ENCODE measurements at regions of chr6 and their contacts with region 1.

Region 1: GRCh38 chr6:34887753-34888513 is at the start of gene TAF11:
- DNase-seq: peak; percentile 86
- H3K4me3 Mint-ChIP-seq: peak within 1 kb of the TSS; percentile 98
- H3K27ac Mint-ChIP-seq: peak within 1 kb of the TSS; percentile 96
- H3K4me1 Mint-ChIP-seq: peaks cover 28% of the 10 kb centered on the region
- H3K27me3 Mint-ChIP-seq: peaks cover 3% of the 10 kb centered on the region
- total RNA-seq, gene TAF11: 37.2 and 38.4 TPM in 2 replicates

Region 2: DNA sequence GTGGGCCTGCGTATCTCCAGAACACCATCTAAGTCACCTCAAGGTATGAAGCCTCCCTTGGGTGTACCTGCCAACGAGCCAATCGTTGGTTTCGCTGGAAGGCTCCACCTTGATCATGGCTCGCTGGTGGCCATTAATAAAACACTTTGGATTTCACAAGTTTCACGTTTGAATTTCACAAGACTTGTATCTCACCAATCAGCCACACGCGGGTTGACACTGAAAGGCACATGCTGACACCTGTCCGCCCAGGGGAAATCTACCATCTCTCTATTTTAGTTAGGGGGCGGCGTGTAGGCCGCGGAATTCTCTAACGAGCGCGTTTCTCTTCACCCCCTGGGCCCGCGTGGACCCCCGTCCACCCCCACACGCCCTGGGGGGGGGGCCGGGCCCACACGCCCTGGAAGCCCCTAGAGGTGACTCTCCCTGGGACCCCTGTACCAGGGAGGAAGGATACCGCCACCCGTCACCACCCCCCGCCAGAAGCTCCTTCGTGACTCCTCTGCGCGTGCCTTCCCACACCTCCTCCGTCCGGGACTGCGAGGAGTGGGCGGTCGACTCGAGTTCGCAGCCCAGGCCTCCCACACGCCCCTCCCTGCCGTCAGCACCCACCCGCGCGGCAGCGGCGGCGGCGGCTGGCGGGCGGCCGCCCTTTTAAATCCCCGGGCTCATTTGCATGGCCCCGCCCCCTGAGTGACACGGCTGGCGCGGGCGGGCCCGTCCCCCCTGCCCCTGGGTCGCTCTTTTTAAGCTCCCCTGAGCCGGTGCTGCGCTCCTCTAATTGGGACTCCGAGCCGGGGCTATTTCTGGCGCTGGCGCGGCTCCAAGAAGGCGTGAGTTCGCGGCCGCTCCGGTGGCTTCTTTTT is 651.6 kb before region 1 on chr6 and contains the start of gene HMGA1:
- intact Hi-C with region 1: loop called (anchors 5 kb)
- DNase-seq: peak; percentile 83
- H3K4me3 Mint-ChIP-seq: peak within 1 kb of the TSS; percentile 86
- H3K27ac Mint-ChIP-seq: peak within 1 kb of the TSS; percentile 92
- H3K4me1 Mint-ChIP-seq: peaks cover 43% of the 10 kb centered on the region
- H3K27me3 Mint-ChIP-seq: no peaks in the 10 kb centered on the region
- total RNA-seq, gene HMGA1: 415 and 438 TPM in 2 replicates

Region 3: DNA sequence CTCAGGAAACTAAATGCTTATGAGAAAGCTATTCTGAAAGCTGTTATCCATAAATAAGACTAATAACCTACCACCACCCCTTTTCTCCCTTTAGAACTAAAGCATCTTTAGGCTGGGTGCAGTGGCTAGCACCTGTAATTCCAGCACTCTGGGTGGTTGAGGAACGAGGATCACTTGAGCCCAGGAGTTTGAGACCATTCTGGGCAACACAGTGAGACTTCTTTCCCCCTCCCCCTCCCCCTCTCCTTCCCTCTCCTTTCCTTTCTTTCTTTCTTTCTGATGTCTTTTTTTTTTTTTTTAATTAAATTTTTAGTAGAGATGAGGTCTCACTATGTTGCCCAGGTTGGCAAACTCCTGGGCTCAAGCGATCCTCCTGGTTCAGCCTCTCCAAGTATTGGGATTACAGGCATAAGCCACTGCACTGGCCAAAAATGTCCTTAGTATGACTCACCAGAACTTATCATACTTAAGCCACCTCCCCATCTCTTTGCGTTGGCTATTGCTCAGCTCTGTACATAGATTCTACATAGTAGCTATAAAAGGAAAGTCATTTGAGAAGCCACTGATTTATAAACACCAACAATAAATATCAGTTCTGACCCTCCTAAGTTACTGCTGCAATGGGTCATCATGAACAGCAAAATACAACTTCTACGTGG is 277.0 kb before region 1 on chr6:
- intact Hi-C with region 1: no loop called
- DNase-seq: no peak
- H3K4me3 Mint-ChIP-seq: no peak overlapping the region
- H3K27ac Mint-ChIP-seq: no peak overlapping the region
- H3K4me1 Mint-ChIP-seq: peaks cover 36% of the 10 kb centered on the region
- H3K27me3 Mint-ChIP-seq: no peaks in the 10 kb centered on the region

Region 4: DNA sequence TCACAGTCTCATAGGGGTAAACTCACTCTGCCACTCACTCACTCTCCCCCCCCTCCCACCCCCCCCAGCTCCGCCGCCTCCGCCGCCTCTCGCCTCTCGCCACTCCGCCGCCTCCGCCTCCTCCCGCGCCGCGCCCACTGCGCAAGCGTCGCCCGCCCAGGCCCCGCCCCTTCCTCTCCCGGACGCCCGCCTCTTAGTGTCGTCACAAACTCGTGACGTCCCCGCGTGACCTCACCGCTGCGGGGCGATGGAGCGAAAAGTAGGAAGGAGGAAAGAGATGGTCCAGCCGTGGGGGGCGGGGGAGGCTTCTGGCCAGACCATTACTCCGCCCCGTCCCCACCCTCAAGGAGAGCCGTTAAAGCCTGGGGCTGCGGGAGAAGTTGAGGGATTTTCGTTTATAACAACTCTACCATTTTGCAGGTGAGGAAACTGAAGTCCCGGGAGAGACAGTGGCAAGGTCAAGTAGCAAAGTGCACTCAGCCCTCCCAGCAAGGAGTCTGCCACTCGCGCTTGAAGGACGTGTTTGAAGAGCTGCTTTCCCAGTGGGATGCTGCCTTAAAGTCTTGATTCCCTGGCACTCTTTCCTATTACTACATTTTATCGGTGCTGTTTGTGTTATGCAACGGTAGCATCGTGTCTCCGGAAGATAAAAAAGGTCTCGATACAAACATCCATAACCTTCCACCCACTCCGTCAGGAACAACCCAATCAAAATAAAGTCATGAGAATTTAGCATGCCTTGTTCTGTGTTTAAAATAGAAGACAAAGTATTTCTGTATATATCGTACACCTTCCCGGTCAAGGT is 191.0 kb before region 1 on chr6 and contains the start of gene ILRUN:
- intact Hi-C with region 1: loop called (anchors 2 kb)
- DNase-seq: peak; percentile 93
- H3K4me3 Mint-ChIP-seq: peak within 1 kb of the TSS; percentile 92
- H3K27ac Mint-ChIP-seq: peak within 1 kb of the TSS; percentile 98
- H3K4me1 Mint-ChIP-seq: peaks cover 39% of the 10 kb centered on the region
- H3K27me3 Mint-ChIP-seq: peaks cover 4% of the 10 kb centered on the region
- total RNA-seq, gene ILRUN: 62.7 and 64.4 TPM in 2 replicates

Region 5: DNA sequence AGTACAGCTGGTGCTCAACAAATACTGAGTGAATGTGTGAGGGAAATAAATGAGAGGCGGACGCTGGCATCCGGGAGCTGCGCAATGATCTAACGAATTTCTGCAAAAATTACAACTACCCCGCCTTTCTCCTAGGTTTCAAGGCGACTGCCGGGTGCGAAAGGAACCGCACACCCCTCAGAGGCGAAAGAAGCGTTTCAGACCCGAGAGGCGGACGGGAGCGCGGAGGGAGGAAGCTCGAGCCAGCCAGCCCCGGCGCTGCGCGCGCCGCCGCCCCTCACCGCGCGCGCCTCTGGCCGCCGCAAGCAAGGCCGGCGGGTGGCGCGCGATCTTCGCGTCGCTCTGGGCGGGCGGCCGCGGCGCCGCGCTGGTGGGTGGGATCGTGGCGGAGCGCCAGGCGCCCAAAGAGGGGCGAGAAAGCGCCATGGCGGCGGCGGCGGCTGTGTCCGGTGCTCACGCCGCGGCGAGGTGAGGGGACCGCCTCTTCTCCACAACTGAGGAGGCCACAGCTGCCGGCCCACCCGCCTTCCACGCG is 96.2 kb before region 1 on chr6 and contains the start of gene BLTP3A:
- intact Hi-C with region 1: loop called (anchors 2 kb)
- DNase-seq: peak; percentile 76
- H3K4me3 Mint-ChIP-seq: peak within 1 kb of the TSS; percentile 99
- H3K27ac Mint-ChIP-seq: peak within 1 kb of the TSS; percentile 97
- H3K4me1 Mint-ChIP-seq: peaks cover 29% of the 10 kb centered on the region
- H3K27me3 Mint-ChIP-seq: no peaks in the 10 kb centered on the region
- total RNA-seq, gene BLTP3A: 17.2 and 17.8 TPM in 2 replicates

Region 6: DNA sequence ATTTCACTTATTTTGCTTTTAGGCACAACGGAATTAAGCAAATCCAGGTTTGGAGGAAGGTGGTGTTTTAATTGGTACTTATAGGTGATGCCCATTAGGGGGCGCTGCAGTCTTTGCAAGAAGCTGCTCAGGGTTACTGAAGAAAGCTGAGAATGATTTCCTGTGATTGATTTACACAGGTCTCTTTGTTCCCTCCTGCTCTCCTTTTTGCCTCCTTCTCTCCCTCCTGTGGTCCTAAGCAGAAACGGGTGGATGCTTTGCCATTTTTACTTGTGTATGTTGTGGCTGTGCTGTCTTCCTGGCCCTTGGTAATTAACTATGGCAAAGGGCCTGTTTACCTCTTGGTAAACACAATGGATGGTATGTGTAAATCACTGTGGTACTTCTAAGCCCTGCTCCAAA is 98.9 kb after region 1 on chr6:
- intact Hi-C with region 1: no loop called
- DNase-seq: peak; percentile 37
- H3K4me3 Mint-ChIP-seq: no peak overlapping the region
- H3K27ac Mint-ChIP-seq: no peak overlapping the region
- H3K4me1 Mint-ChIP-seq: no peaks in the 10 kb centered on the region
- H3K27me3 Mint-ChIP-seq: no peaks in the 10 kb centered on the region

Region 7: GRCh38 chr6:35139908-35140655 is 252.1 kb after region 1 on chr6:
- intact Hi-C with region 1: loop called (anchors 2 kb)
- DNase-seq: peak; percentile 21
- H3K4me3 Mint-ChIP-seq: peak overlapping the region; percentile 65
- H3K27ac Mint-ChIP-seq: peak overlapping the region; percentile 68
- H3K4me1 Mint-ChIP-seq: peaks cover 26% of the 10 kb centered on the region
- H3K27me3 Mint-ChIP-seq: peaks cover 21% of the 10 kb centered on the region

Region 8: GRCh38 chr6:35259194-35259947 is 371.4 kb after region 1 on chr6 and contains the start of gene ZNF76:
- intact Hi-C with region 1: loop called (anchors 1 kb)
- DNase-seq: peak; percentile 87
- H3K4me3 Mint-ChIP-seq: peak within 1 kb of the TSS; percentile 96
- H3K27ac Mint-ChIP-seq: peak within 1 kb of the TSS; percentile 88
- H3K4me1 Mint-ChIP-seq: peaks cover 40% of the 10 kb centered on the region
- H3K27me3 Mint-ChIP-seq: no peaks in the 10 kb centered on the region
- total RNA-seq, gene ZNF76: 32.8 and 33.1 TPM in 2 replicates

Region 9: GRCh38 chr6:36848658-36849441 is 1960.9 kb after region 1 on chr6:
- intact Hi-C with region 1: no loop called
- DNase-seq: no peak
- H3K4me3 Mint-ChIP-seq: no peak overlapping the region
- H3K27ac Mint-ChIP-seq: no peak overlapping the region
- H3K4me1 Mint-ChIP-seq: no peaks in the 10 kb centered on the region
- H3K27me3 Mint-ChIP-seq: no peaks in the 10 kb centered on the region

Measured in activated T-helper 1 cell treated with anti-CD3 and anti-CD28 coated beads, Interleukin-12 subunit alpha, Interleukin-12 subunit beta, Interleukin-2, Interleukin-4 antibody, amounts not matched to agents 30 ng/mL and 10 ng/mL and 1 ng/mL, durations not matched to agents 14 hours and 24 hours and 36 hours (primary cell).